ENCODE measurements at regions of chr16 and their contacts with region 1.

Region 1: GRCh38 chr16:15427648-15428239 is 6.6 kb upstream of the BMERB1 start:
- DNase-seq: peak; percentile 12 to 71 (median 52)
- ATAC-seq: no peak
- H3K4me3 ChIP-seq: no peak overlapping the region
- H3K4me3 Mint-ChIP-seq: no peak overlapping the region
- H3K27ac ChIP-seq: no peak overlapping the region
- H3K27ac Mint-ChIP-seq: no peak overlapping the region
- H3K4me1 ChIP-seq: no peaks in the 10 kb centered on the region
- H3K4me1 Mint-ChIP-seq: peaks cover 2% of the 10 kb centered on the region
- H3K27me3 ChIP-seq: no peaks in the 10 kb centered on the region
- H3K27me3 Mint-ChIP-seq: peaks cover under 1% of the 10 kb centered on the region
- CTCF ChIP-seq: peak; percentile 63

Region 2: DNA sequence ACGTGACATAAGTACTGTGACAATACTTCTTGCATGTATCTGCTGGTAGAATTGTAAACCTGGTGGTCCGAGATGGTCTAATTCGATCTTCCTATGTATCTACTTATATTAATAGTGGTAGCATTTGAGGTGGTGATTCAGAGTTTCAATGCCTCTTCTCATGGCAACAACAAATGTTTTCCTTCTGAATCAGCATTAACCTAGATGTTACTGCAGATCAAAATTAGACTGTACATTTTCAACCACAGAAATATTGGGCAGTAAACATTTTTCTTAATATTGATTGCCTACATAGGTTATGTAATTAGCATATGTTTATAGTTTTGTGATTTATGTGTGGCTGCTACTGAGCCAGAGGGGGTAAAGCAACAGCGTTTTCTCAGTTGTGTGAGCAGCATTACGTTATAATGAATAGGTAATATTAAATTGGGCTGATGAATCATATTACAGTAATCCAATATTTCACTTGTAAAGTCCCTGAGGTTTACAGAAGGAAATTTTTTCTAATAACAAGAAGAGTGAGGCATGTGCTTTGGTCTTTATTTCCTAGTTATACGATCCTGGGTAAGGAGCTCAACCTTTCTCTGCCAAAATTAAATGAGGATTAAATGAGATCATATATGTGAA is 12.2 kb before region 1 on chr16:
- CTCF ChIA-PET with region 1: interaction called, 11 read pairs
- POLR2A ChIA-PET with region 1: no interaction called
- intact Hi-C with region 1: no loop called
- DNase-seq: no peak
- ATAC-seq: no peak
- H3K4me3 ChIP-seq: no peak overlapping the region
- H3K4me3 Mint-ChIP-seq: no peak overlapping the region
- H3K27ac ChIP-seq: no peak overlapping the region
- H3K27ac Mint-ChIP-seq: no peak overlapping the region
- H3K4me1 ChIP-seq: no peaks in the 10 kb centered on the region
- H3K4me1 Mint-ChIP-seq: no peaks in the 10 kb centered on the region
- H3K27me3 ChIP-seq: no peaks in the 10 kb centered on the region
- H3K27me3 Mint-ChIP-seq: peaks cover 7% of the 10 kb centered on the region
- CTCF ChIP-seq: no peak

Region 3: GRCh38 chr16:15592324-15592723 is 164.6 kb after region 1 on chr16:
- CTCF ChIA-PET with region 1: interaction called, 3 read pairs
- POLR2A ChIA-PET with region 1: no interaction called
- intact Hi-C with region 1: loop called in 1 of 2 experiments (anchors 5 kb)
- DNase-seq: peak in 8 of 9 experiments; percentile 19 to 71 (median 48)
- ATAC-seq: peak; percentile 5
- H3K4me3 ChIP-seq: no peak overlapping the region
- H3K4me3 Mint-ChIP-seq: no peak overlapping the region
- H3K27ac ChIP-seq: peak overlapping the region in 1 of 2 experiments; percentile 65
- H3K27ac Mint-ChIP-seq: peak overlapping the region; percentile 85
- H3K4me1 ChIP-seq: peaks cover 29% of the 10 kb centered on the region
- H3K4me1 Mint-ChIP-seq: peaks cover 35% of the 10 kb centered on the region
- H3K27me3 ChIP-seq: no peaks in the 10 kb centered on the region
- H3K27me3 Mint-ChIP-seq: no peaks in the 10 kb centered on the region
- CTCF ChIP-seq: no peak

Region 4: DNA sequence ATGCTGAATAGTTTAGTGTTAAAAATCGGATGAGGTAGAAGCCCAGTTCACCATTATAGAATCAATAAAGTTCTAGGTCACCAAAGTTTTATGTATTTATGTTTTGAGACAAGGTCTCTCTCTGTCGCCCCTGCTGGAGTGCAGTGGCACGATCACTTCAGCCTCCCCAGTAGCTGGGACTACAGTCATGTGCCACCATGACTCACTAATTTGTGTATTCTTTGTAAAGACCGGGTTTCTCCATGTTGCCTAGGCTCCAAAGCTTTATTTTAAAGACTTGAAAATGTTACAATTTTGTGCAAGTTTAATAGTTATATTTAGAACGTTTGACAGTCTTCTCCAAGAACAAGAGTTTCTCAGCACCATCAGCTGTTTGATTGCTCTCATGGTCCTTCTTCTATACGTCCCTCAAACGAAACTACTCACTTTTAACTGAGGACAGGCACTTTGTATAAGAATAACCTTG is 254.4 kb after region 1 on chr16:
- CTCF ChIA-PET with region 1: interaction called, 3 read pairs
- POLR2A ChIA-PET with region 1: no interaction called
- intact Hi-C with region 1: loop called in 1 of 2 experiments (anchors 5 kb)
- DNase-seq: peak in 5 of 9 experiments; percentile 22 to 62 (median 49)
- ATAC-seq: peak; percentile 93
- H3K4me3 ChIP-seq: no peak overlapping the region
- H3K4me3 Mint-ChIP-seq: no peak overlapping the region
- H3K27ac ChIP-seq: no peak overlapping the region
- H3K27ac Mint-ChIP-seq: peak overlapping the region; percentile 66
- H3K4me1 ChIP-seq: peaks cover 5% of the 10 kb centered on the region
- H3K4me1 Mint-ChIP-seq: peaks cover 6% of the 10 kb centered on the region
- H3K27me3 ChIP-seq: no peaks in the 10 kb centered on the region
- H3K27me3 Mint-ChIP-seq: no peaks in the 10 kb centered on the region
- CTCF ChIP-seq: peak; percentile 35

Region 5: GRCh38 chr16:15704545-15704987 is 276.8 kb after region 1 on chr16:
- CTCF ChIA-PET with region 1: interaction called, 35 read pairs
- POLR2A ChIA-PET with region 1: interaction called, 3 read pairs
- intact Hi-C with region 1: loop called (anchors 1 kb)
- DNase-seq: peak; percentile 56 to 87 (median 73)
- ATAC-seq: peak; percentile 82
- H3K4me3 ChIP-seq: no peak overlapping the region
- H3K4me3 Mint-ChIP-seq: no peak overlapping the region
- H3K27ac ChIP-seq: no peak overlapping the region
- H3K27ac Mint-ChIP-seq: peak overlapping the region; percentile 22
- H3K4me1 ChIP-seq: no peaks in the 10 kb centered on the region
- H3K4me1 Mint-ChIP-seq: peaks cover 16% of the 10 kb centered on the region
- H3K27me3 ChIP-seq: no peaks in the 10 kb centered on the region
- H3K27me3 Mint-ChIP-seq: no peaks in the 10 kb centered on the region
- CTCF ChIP-seq: peak; percentile 88

Region 6: DNA sequence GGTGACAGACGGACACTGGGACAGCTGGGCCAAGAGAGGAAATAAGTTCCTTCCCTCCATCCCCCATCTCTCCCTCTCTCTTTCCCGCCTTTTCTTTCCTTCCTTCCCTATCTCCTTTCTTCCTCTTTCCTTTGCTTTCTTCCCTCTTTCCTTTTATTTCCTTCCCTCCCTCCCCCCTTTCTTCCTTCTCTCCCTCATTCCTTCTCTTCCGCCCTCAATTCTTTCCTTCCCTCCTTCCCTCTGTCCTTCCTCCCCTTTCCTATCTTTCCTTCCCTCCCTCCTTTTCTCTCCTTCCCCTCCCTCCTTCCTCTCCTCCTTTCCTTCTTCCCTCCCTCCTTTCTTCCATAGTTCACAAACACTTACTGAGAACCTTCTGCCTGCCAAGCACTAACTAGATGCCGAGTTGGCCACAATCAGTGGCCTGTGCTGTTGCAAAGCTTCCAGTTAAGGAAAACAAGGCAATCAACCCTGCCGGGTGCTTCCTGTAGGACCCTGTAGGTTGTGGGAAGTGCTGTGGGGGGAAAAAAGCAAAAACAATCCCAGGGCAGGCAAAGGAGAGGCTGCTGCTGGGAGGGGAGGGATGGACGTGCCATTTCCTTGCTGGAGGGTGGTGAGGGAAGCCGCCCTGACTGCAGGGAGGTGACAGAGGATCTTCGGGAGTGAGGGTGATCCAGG is 763.9 kb after region 1 on chr16:
- CTCF ChIA-PET with region 1: no interaction called
- POLR2A ChIA-PET with region 1: no interaction called
- intact Hi-C with region 1: loop called in 1 of 2 experiments (anchors 10 kb)
- DNase-seq: no peak
- ATAC-seq: no peak
- H3K4me3 ChIP-seq: no peak overlapping the region
- H3K4me3 Mint-ChIP-seq: no peak overlapping the region
- H3K27ac ChIP-seq: no peak overlapping the region
- H3K27ac Mint-ChIP-seq: no peak overlapping the region
- H3K4me1 ChIP-seq: no peaks in the 10 kb centered on the region
- H3K4me1 Mint-ChIP-seq: no peaks in the 10 kb centered on the region
- H3K27me3 ChIP-seq: no peaks in the 10 kb centered on the region
- H3K27me3 Mint-ChIP-seq: peaks cover 4% of the 10 kb centered on the region
- CTCF ChIP-seq: no peak